CD14-positive monocyte (primary cell): ENCODE measurements at regions of chr22 and their contacts with region 1.

Region 1: DNA sequence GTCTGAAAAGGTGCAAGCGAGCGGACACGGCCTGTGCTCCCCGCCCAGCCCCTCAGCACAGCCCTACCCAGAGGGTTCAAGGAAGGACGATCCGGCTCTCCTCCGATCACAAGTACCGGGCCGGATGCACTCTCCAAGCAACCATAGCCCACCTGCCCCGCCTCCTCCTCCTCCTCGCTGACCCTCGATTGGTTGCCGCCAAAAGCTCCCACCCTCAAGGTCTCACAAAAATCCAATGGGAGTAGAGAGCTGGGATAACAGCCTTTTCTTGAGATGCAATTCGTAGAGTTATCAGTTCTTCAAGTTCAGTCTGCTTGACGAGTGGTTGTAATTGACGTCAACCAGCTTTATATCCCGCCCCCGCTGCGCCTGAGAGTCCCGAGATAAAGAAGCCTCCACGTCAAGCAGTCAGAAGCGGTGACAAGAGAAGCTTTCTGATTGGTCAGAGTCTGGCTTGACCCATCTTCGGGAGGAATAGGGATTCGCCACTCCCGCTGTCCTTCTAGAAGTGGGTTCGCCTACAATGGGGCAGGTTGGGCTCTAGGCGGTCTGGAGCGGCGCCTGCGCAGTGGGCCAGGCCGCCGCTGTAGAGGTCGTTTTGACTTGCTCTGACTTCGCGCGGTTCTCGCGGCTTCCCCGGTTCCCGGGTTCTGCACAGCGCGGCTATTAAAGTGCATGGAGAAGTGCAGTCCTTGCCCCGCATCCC is at the start of gene IFT27:
- DNase-seq: peak; percentile 100
- H3K4me3 ChIP-seq: peak within 1 kb of the TSS; percentile 65 to 80 (median 78)
- H3K4me3 Mint-ChIP-seq: peak within 1 kb of the TSS; percentile 87 to 93
- H3K27ac ChIP-seq: peak within 1 kb of the TSS; percentile 34 to 76
- H3K27ac Mint-ChIP-seq: peak within 1 kb of the TSS; percentile 79 to 93 (median 90)
- H3K4me1 ChIP-seq: peaks cover 18 to 29% of the 10 kb centered on the region in 2 donors
- H3K4me1 Mint-ChIP-seq: peaks cover 22% of the 10 kb centered on the region
- H3K27me3 ChIP-seq: no peaks in the 10 kb centered on the region
- H3K27me3 Mint-ChIP-seq: peaks cover 0 to 5% (median 4%) of the 10 kb centered on the region in 3 donors
- CTCF ChIP-seq: no peak
- polyA plus RNA-seq, gene IFT27: 12.5 to 16.9 (median 14.6) TPM

Region 2: GRCh38 chr22:36528795-36529751 is 247.0 kb before region 1 on chr22 and contains the start of gene EIF3D:
- intact Hi-C with region 1: loop called (anchors 5 to 10 kb)
- DNase-seq: peak; percentile 100
- H3K4me3 ChIP-seq: peak within 1 kb of the TSS; percentile 70 to 88 (median 75)
- H3K4me3 Mint-ChIP-seq: peak within 1 kb of the TSS; percentile 90 to 91
- H3K27ac ChIP-seq: peak within 1 kb of the TSS; percentile 90 to 96
- H3K27ac Mint-ChIP-seq: peak within 1 kb of the TSS; percentile 95 to 99 (median 98)
- H3K4me1 ChIP-seq: peaks cover 16 to 27% of the 10 kb centered on the region in 2 donors
- H3K4me1 Mint-ChIP-seq: peaks cover 20% of the 10 kb centered on the region
- H3K27me3 ChIP-seq: no peaks in the 10 kb centered on the region
- H3K27me3 Mint-ChIP-seq: peaks cover 2 to 5% (median 5%) of the 10 kb centered on the region in 3 donors
- CTCF ChIP-seq: no peak
- polyA plus RNA-seq, gene EIF3D: 102 to 244 (median 122) TPM

Region 3: DNA sequence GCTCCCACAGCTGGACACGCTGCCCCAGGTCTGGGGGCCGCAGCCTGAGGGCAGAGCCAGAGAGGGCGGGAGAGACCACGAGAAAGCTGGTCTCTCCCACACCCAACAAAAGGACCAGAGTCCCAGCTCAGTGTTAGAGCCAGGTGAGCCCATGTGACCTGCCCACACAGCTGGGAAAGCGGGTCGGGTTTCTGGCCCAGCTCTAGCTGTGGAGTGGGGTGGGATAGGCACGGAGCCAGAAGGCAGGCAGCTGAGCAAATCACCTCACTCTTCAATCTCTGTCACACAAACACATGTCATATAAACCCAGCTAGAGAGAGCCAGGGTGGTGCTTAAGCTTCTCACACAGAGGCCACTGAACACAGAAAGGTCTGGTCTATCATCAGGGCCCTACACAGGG is 239.4 kb before region 1 on chr22:
- intact Hi-C with region 1: loop called in 1 of 2 experiments (anchors 10 kb)
- DNase-seq: no peak
- H3K4me3 ChIP-seq: no peak overlapping the region
- H3K4me3 Mint-ChIP-seq: no peak overlapping the region
- H3K27ac ChIP-seq: no peak overlapping the region
- H3K27ac Mint-ChIP-seq: no peak overlapping the region
- H3K4me1 ChIP-seq: no peaks in the 10 kb centered on the region
- H3K4me1 Mint-ChIP-seq: no peaks in the 10 kb centered on the region
- H3K27me3 ChIP-seq: no peaks in the 10 kb centered on the region
- H3K27me3 Mint-ChIP-seq: peaks cover under 1 to 9% (median 7%) of the 10 kb centered on the region in 3 donors
- CTCF ChIP-seq: no peak